IMR-90 (cell line): ENCODE measurements at regions of chr4 and their contacts with region 1.

Region 1: DNA sequence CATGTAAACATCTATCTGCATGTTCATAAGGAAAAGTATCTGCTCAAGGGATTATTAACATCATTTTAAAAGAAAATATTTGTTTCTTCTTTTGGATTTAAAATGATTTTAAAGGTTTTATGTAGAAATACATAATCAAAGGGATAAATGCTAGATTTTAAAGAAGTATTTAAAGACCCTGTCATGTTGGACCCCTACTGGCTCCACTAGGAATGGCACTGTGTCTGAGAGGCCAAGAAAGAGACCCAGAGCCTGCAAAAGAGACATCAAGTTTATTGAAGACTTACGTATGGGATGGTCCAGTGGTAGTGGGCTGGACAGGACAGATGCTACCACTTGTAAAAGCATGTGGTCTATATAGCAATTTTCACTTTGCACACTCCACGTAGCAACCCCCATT is 78.7 kb upstream of the PCDH18 start:
- DNase-seq: peak; percentile 19
- ATAC-seq: no peak
- H3K4me3 ChIP-seq: no peak overlapping the region
- H3K27ac ChIP-seq: peak overlapping the region; percentile 47; the same call in 1 of the 2 replicates
- H3K4me1 ChIP-seq: peaks cover 9% of the 10 kb centered on the region
- H3K27me3 ChIP-seq: no peaks in the 10 kb centered on the region
- CTCF ChIP-seq: peak; percentile 32; the same call in 1 of the 2 replicates
- POLR2A ChIP-seq: no peak
- RAD21 ChIP-seq: 0 out of 2 replicates have a peak, but pooled peaks have one; percentile 18

Region 2: GRCh38 chr4:137545461-137545861 is 65.5 kb before region 1 on chr4:
- CTCF ChIA-PET with region 1: no interaction called
- POLR2A ChIA-PET with region 1: no interaction called
- dilution Hi-C with region 1: no loop called
- in situ Hi-C with region 1: no loop called
- intact Hi-C with region 1: loop called (anchors 2 kb)
- DNase-seq: peak; percentile 94
- ATAC-seq: peak; percentile 89
- H3K4me3 ChIP-seq: no peak overlapping the region
- H3K27ac ChIP-seq: peak overlapping the region; percentile 39; the same call in 1 of the 2 replicates
- H3K4me1 ChIP-seq: peaks cover 4% of the 10 kb centered on the region; the same call in 1 of the 2 replicates
- H3K27me3 ChIP-seq: no peaks in the 10 kb centered on the region
- CTCF ChIP-seq: peak; percentile 37
- POLR2A ChIP-seq: no peak
- RAD21 ChIP-seq: peak; percentile 44; the same call in 1 of the 2 replicates

Region 3: GRCh38 chr4:137651128-137651527 is 40.2 kb after region 1 on chr4:
- CTCF ChIA-PET with region 1: interaction called, 3 read pairs
- POLR2A ChIA-PET with region 1: no interaction called
- dilution Hi-C with region 1: no loop called
- in situ Hi-C with region 1: no loop called
- intact Hi-C with region 1: loop called (anchors 5 kb)
- DNase-seq: peak; percentile 72
- ATAC-seq: peak; percentile 62; the same call in 1 of the 2 replicates
- H3K4me3 ChIP-seq: no peak overlapping the region
- H3K27ac ChIP-seq: peak overlapping the region; percentile 76
- H3K4me1 ChIP-seq: peaks cover 5% of the 10 kb centered on the region; the same call in 1 of the 2 replicates
- H3K27me3 ChIP-seq: no peaks in the 10 kb centered on the region
- CTCF ChIP-seq: no peak
- POLR2A ChIP-seq: no peak
- RAD21 ChIP-seq: no peak